ENCODE measurements at regions of chr17 and their contacts with region 1.

Region 1: GRCh38 chr17:40203131-40203530 is 16.0 kb upstream of the WIPF2 start:
- DNase-seq: no peak
- H3K4me3 Mint-ChIP-seq: no peak overlapping the region
- H3K27ac Mint-ChIP-seq: no peak overlapping the region
- H3K4me1 Mint-ChIP-seq: peaks cover 7% of the 10 kb centered on the region
- H3K27me3 Mint-ChIP-seq: no peaks in the 10 kb centered on the region
- CTCF ChIP-seq: no peak

Region 2: DNA sequence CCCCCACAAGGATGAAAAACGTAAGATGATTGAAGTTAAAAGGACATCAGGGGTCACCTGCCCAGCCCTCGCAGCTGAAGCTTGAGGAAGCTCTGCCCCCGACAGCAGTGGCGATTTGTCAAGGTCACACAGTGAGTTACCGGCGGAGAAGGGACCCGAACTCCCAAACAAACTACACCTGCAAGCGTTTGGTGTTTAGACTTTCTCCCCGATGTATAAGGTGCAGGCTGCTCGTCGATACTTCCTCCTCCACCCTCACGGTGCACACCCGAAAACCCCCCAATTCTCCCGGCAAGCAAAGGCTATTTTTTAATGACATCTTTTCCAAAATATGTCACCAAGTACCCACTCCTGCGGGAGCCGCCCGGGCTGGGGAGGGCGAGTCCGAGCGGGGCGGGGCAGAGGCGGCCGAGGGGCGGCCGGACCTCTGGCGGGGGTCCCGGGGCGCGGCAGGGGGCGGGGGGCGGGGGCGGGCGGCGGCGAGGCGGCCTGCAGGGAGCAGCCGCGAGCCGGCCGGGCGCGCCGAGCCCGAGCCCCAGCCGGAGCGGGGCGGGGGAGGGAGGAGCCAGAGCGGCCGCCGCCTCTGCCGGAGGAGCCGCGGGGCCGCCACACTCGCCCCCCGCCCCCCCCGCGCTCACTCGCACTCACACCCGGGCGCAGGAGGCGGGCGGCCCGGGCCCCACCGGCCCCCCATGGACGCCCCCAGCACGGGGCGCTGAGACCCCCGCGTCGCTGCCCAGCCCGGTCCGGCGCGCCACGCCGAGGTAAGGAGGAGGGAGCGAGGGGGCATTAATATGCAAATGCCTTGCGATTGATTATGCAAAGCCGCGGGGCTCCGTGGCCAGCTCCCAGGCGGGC is 140.6 kb before region 1 on chr17 and contains the start of gene THRA:
- CTCF ChIA-PET with region 1: interaction called, 14 read pairs
- intact Hi-C with region 1: no loop called
- DNase-seq: peak; percentile 100
- H3K4me3 Mint-ChIP-seq: peak within 1 kb of the TSS; percentile 54
- H3K27ac Mint-ChIP-seq: peak within 1 kb of the TSS; percentile 27
- H3K4me1 Mint-ChIP-seq: peaks cover 55% of the 10 kb centered on the region
- H3K27me3 Mint-ChIP-seq: peaks cover 52% of the 10 kb centered on the region
- CTCF ChIP-seq: no peak
- total RNA-seq, gene THRA: 107 and 133 TPM in 2 replicates

Region 3: DNA sequence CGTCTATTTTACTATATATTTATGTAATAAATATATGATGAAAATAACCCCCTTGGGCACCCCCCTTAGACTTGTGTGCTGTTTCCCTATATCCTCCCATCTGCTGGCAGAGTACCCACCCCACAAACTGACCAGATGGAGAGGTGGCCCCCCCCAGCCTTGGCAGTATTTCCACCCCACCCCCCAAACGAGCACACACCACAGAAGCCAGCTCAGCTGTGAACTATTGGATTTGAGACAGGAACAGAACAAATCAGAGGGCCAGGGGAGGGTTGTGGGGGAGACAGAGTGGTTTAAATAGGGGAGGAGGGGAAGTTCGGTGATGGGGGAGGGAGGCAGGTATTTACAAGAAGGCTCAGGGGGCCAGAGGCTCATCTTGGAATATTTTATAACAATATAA is 110.5 kb before region 1 on chr17:
- CTCF ChIA-PET with region 1: no interaction called
- intact Hi-C with region 1: no loop called
- DNase-seq: no peak
- H3K4me3 Mint-ChIP-seq: no peak overlapping the region
- H3K27ac Mint-ChIP-seq: no peak overlapping the region
- H3K4me1 Mint-ChIP-seq: peaks cover 11% of the 10 kb centered on the region
- H3K27me3 Mint-ChIP-seq: no peaks in the 10 kb centered on the region
- CTCF ChIP-seq: no peak

Region 4: DNA sequence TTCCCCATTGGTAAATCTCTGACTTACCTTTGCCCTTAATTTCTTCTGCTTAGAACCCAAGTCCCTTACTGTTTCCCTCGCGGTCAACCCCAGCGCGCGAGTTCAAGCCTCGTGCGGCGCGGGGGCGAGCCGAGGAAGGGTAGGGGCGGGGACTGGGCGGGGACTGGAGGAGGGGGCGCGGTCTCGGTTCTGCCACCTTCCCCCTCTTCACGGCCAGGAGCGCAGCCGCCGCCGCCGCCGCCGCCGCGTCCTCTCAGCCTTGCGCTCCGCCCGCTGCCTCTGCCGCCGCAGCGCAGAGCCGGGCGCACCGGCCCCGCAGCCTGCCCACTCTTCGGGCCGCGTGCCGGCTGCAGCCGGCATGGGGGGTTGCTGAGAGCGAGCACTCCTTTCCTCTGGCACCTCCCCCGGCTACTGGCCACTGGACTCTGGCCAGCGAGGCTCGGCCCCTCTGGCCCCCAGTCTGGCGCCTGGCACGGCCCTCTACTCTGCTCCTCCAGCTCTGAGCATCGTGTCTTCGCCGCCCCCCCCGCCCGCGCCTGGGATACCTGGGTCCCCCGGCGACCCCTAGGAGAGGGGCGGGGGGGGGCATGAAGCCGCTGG is 25.8 kb before region 1 on chr17 and contains the start of gene RAPGEFL1:
- CTCF ChIA-PET with region 1: interaction called, 145 read pairs
- intact Hi-C with region 1: no loop called
- DNase-seq: peak; percentile 100
- H3K4me3 Mint-ChIP-seq: peak within 1 kb of the TSS; percentile 76
- H3K27ac Mint-ChIP-seq: peak within 1 kb of the TSS; percentile 61
- H3K4me1 Mint-ChIP-seq: peaks cover 51% of the 10 kb centered on the region
- H3K27me3 Mint-ChIP-seq: no peaks in the 10 kb centered on the region
- CTCF ChIP-seq: no peak
- total RNA-seq, gene RAPGEFL1: 57.9 and 86.3 TPM in 2 replicates

Region 5: DNA sequence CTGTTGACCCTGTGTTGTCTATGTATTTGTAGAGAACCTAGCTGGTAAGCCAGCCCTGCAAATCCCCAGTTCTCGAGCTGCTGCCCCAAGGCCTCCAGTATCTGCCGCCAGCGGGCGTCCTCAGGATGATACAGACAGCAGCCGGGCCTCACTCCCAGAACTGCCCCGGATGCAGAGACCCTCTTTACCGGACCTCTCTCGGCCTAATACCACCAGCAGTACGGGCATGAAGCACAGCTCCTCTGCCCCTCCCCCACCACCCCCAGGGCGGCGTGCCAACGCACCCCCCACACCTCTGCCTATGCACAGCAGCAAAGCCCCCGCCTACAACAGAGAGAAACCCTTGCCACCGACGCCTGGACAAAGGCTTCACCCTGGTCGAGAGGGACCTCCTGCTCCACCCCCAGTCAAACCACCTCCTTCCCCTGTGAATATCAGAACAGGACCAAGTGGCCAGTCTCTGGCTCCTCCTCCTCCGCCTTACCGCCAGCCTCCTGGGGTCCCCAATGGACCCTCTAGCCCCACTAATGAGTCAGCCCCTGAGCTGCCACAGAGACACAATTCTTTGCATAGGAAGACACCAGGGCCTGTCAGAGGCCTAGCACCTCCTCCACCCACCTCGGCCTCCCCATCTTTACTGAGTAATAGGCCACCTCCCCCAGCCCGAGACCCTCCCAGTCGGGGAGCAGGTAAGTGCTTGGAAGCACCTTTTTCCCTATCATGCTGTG is 61.5 kb after region 1 on chr17:
- CTCF ChIA-PET with region 1: interaction called, 23 read pairs
- intact Hi-C with region 1: no loop called
- DNase-seq: no peak
- H3K4me3 Mint-ChIP-seq: no peak overlapping the region
- H3K27ac Mint-ChIP-seq: no peak overlapping the region
- H3K4me1 Mint-ChIP-seq: no peaks in the 10 kb centered on the region
- H3K27me3 Mint-ChIP-seq: no peaks in the 10 kb centered on the region
- CTCF ChIP-seq: no peak

Region 6: GRCh38 chr17:40355123-40355803 is 152.1 kb after region 1 on chr17:
- CTCF ChIA-PET with region 1: interaction called, 3 read pairs
- intact Hi-C with region 1: loop called (anchors 1 kb)
- DNase-seq: peak; percentile 100
- H3K4me3 Mint-ChIP-seq: no peak overlapping the region
- H3K27ac Mint-ChIP-seq: no peak overlapping the region
- H3K4me1 Mint-ChIP-seq: peaks cover 29% of the 10 kb centered on the region
- H3K27me3 Mint-ChIP-seq: no peaks in the 10 kb centered on the region
- CTCF ChIP-seq: no peak

Region 7: GRCh38 chr17:40707720-40708119 is 504.6 kb after region 1 on chr17:
- CTCF ChIA-PET with region 1: interaction called, 19 read pairs
- intact Hi-C with region 1: no loop called
- DNase-seq: peak; percentile 92
- H3K4me3 Mint-ChIP-seq: no peak overlapping the region
- H3K27ac Mint-ChIP-seq: peak overlapping the region; percentile 14
- H3K4me1 Mint-ChIP-seq: peaks cover 36% of the 10 kb centered on the region
- H3K27me3 Mint-ChIP-seq: peaks cover 14% of the 10 kb centered on the region
- CTCF ChIP-seq: no peak